GM13976 (cell line): ENCODE measurements at regions of chr20 and their contacts with region 1.

Region 1: GRCh38 chr20:58094160-58094559 is 134.3 kb downstream of the ANKRD60 start:
- DNase-seq: no peak
- CTCF ChIP-seq: no peak

Region 2: DNA sequence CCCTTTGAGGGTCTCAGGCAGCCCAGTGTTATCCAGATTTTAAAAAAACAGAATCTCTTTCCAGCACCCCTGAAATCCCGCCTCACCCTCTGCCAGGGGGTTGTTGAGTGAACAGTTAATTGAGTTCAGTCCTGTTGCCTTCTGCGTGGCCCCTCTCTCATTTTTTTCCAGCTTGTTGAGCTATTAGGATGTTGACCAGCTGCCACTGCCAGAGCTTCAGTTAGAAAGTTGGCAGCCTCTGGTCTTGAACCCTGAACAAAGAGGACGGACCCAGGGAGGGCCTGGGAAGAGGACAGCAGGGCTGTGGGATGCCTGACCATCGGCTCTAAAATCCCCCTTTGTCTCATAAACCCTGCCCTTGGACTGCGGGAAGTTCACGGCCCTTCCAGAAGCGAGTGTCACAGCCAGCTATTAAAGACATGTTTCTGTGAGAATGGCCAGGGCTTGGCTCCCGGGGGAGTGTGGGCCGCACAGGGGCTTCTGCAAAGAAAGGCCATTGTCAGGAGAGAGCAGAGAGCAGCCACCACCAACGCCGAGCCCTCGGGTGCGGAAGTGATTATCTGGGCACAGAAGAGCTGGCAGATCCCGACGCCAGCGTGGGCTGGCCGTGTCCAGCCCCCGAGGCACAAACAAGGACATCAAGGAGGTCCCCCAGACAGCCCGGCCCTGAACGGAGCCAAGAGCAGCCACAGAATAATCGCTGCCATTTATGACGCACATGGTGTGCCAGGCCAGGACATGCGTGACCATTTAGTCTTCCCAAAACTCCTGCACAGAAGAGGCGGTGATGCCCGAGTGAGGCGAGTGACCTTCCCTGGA is 54.7 kb before region 1 on chr20:
- in situ Hi-C with region 1: loop called (anchors 10 kb)
- DNase-seq: no peak
- CTCF ChIP-seq: no peak